ENCODE measurements at regions of chr5 and their contacts with region 1.

Region 1: GRCh38 chr5:131165119-131165727 is at the start of gene HINT1:
- DNase-seq: peak; percentile 91
- H3K4me3 ChIP-seq: peak within 1 kb of the TSS; percentile 79 to 100 (median 99)
- H3K27ac ChIP-seq: peak within 1 kb of the TSS; percentile 95
- H3K4me1 ChIP-seq: peaks cover 11% of the 10 kb centered on the region
- H3K27me3 ChIP-seq: no peaks in the 10 kb centered on the region
- CTCF ChIP-seq: peak in 1 of 2 donors; percentile 22
- POLR2A ChIP-seq: peak; percentile 75
- total RNA-seq, gene HINT1: 217 and 221 TPM in 2 replicates

Region 2: DNA sequence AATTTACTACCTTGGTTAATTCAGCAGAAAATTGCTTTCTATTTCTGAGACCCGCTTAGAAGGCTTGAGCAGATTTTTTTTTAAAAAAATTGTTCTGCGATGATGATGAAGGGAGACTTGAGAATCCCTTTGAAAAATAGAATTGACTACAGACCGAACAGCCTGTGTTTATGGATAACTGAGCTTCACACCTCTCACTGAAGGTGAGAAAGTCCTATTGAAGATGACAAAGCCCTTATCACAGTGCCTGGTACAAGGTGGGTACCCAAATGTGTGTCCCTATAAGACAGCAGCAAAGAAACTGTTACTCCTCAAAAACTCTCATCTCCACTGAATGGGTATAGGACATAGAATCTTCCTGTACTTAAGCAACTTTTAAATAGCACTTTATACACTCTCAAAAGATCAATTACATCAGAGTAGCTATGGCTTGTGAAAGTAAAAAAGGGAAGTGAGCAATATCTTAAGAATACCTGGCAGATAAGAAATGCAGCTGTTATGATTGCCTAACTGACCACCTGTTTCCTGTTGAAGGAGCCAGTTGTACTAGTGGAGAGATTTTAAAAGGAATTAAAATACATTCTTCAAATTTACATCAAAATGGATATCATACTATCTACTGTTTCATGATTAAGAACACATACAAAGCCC is 841.3 kb before region 1 on chr5:
- CTCF ChIA-PET with region 1: no interaction called
- POLR2A ChIA-PET with region 1: no interaction called
- dilution Hi-C with region 1: no loop called
- intact Hi-C with region 1: no loop called
- DNase-seq: peak; percentile 84
- H3K4me3 ChIP-seq: no peak overlapping the region
- H3K27ac ChIP-seq: peak overlapping the region; percentile 86
- H3K4me1 ChIP-seq: peaks cover 12% of the 10 kb centered on the region
- H3K27me3 ChIP-seq: no peaks in the 10 kb centered on the region
- CTCF ChIP-seq: no peak
- POLR2A ChIP-seq: no peak

Region 3: GRCh38 chr5:131239686-131240085 is 74.5 kb after region 1 on chr5:
- CTCF ChIA-PET with region 1: no interaction called
- POLR2A ChIA-PET with region 1: no interaction called
- dilution Hi-C with region 1: no loop called
- intact Hi-C with region 1: no loop called
- DNase-seq: peak; percentile 6
- H3K4me3 ChIP-seq: no peak overlapping the region
- H3K27ac ChIP-seq: no peak overlapping the region
- H3K4me1 ChIP-seq: peaks cover 6% of the 10 kb centered on the region
- H3K27me3 ChIP-seq: no peaks in the 10 kb centered on the region
- CTCF ChIP-seq: no peak
- POLR2A ChIP-seq: no peak

Region 4: GRCh38 chr5:131382407-131383395 is 217.5 kb after region 1 on chr5:
- CTCF ChIA-PET with region 1: interaction called, 6 read pairs
- POLR2A ChIA-PET with region 1: no interaction called
- dilution Hi-C with region 1: no loop called
- intact Hi-C with region 1: loop called (anchors 1 kb)
- DNase-seq: peak; percentile 47
- H3K4me3 ChIP-seq: no peak overlapping the region
- H3K27ac ChIP-seq: no peak overlapping the region
- H3K4me1 ChIP-seq: peaks cover 45% of the 10 kb centered on the region
- H3K27me3 ChIP-seq: no peaks in the 10 kb centered on the region
- CTCF ChIP-seq: peak; percentile 37 to 49
- POLR2A ChIP-seq: no peak

Measured in endothelial cell of umbilical vein (primary cell).